Activated T-helper 1 cell treated with anti-CD3 and anti-CD28 coated beads, Interleukin-12 subunit alpha, Interleukin-12 subunit beta, Interleukin-2, Interleukin-4 antibody, amounts not matched to agents 30 ng/mL and 10 ng/mL and 1 ng/mL, durations not matched to agents 14 hours and 24 hours and 36 hours (primary cell): ENCODE measurements at regions of chr22 and their contacts with region 1.

Region 1: GRCh38 chr22:20507253-20508066 is at the start of gene MED15:
- DNase-seq: peak; percentile 88
- H3K4me3 Mint-ChIP-seq: peak within 1 kb of the TSS; percentile 95
- H3K27ac Mint-ChIP-seq: peak within 1 kb of the TSS; percentile 96
- H3K4me1 Mint-ChIP-seq: peaks cover 50% of the 10 kb centered on the region
- H3K27me3 Mint-ChIP-seq: no peaks in the 10 kb centered on the region
- total RNA-seq, gene MED15: 103 and 110 TPM in 2 replicates

Region 2: GRCh38 chr22:20319745-20320658 is 187.5 kb before region 1 on chr22 and contains the start of gene DGCR6L:
- intact Hi-C with region 1: loop called (anchors 5 kb)
- DNase-seq: peak; percentile 97
- H3K4me3 Mint-ChIP-seq: peak within 1 kb of the TSS; percentile 92
- H3K27ac Mint-ChIP-seq: peak within 1 kb of the TSS; percentile 86
- H3K4me1 Mint-ChIP-seq: peaks cover 62% of the 10 kb centered on the region
- H3K27me3 Mint-ChIP-seq: no peaks in the 10 kb centered on the region
- total RNA-seq, gene DGCR6L: 35.5 and 40.6 TPM in 2 replicates

Region 3: DNA sequence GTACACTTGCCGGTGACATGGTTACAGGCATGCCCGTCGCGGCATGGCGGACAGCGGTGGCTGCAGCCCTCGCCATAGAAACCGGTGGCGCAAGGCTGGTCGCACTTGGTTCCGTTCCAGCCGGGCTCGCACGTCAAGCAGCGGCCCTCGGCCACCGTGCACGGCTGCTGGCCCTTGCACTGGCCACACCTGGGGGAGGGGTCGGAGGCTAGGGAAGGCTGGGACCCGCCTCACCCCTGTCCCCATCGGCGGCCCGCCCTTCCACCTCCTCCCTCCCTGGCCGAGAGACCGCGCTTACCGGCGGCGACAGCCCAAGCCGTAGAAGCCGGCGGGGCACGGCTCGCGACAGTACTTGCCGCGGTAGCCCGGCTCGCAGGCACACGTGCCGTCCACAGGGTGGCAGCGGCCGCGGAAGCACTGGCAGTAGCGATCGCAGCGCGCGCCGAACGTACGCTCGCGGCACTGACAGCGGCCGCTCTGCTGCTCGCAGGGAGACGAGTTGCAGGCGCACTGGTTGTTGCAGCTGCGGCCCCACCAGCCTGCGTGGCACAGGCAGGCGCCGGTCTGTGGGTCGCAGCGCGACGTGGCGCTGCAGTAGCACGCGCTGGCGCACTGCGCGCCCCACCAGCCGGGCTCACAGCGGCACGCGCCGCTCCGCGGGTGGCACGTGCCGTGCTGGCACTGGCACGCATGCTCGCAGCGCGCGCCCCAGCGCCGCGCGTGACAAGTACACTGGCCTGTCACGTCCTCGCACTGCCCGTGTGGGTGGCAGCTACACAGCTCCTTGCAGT is 76.5 kb before region 1 on chr22:
- intact Hi-C with region 1: loop called (anchors 1 kb)
- DNase-seq: peak; percentile 29
- H3K4me3 Mint-ChIP-seq: peak overlapping the region; percentile 42
- H3K27ac Mint-ChIP-seq: no peak overlapping the region
- H3K4me1 Mint-ChIP-seq: peaks cover 6% of the 10 kb centered on the region
- H3K27me3 Mint-ChIP-seq: peaks cover 60% of the 10 kb centered on the region

Region 4: DNA sequence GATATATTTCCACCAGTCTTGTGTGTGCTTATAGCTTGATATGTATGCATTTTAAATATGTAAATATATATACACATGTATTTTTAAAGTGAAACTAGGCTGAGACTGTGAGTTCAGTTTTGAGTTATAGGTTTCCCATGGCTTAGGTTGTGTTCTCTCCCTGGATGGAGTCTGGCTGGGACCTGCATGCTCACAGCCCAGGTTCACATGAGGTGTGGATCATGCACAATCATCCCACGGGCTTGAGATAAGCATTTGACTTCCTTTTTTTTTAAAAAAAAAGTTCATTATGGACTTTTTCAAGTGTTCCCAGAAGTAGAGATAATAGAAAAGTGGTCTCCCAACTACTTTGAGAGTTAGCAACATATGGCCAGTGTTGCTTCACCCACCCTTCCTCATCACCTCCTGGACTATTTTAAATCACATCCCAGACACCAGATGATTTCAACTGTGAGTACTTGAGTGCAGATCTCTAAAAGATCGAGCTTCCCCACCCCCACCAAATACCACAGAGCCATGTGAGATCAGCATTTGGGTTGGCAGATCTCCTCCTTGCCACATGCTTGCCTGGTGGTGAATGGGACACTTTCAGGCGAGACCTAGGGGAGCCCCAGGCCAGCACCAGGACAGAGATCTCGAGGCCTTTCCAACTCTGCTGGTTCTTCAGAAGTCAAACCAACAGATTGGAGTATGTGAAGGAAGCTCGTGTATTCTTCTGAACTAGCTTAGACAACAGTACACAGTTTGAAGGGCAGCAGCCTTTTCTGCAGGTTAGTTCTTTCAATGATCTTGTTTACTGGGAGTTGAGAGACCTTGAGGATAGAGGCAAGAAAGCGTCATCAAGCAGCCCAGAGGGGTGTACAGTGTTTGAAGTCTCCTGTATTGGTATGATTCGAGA is 15.9 kb after region 1 on chr22:
- intact Hi-C with region 1: loop called (anchors 2 kb)
- DNase-seq: no peak
- H3K4me3 Mint-ChIP-seq: peak overlapping the region; percentile 19
- H3K27ac Mint-ChIP-seq: peak overlapping the region; percentile 47
- H3K4me1 Mint-ChIP-seq: peaks cover 56% of the 10 kb centered on the region
- H3K27me3 Mint-ChIP-seq: no peaks in the 10 kb centered on the region

Region 5: GRCh38 chr22:20550821-20551744 is 43.6 kb after region 1 on chr22:
- intact Hi-C with region 1: loop called (anchors 1 kb)
- DNase-seq: no peak
- H3K4me3 Mint-ChIP-seq: peak overlapping the region; percentile 75
- H3K27ac Mint-ChIP-seq: peak overlapping the region; percentile 95
- H3K4me1 Mint-ChIP-seq: peaks cover 61% of the 10 kb centered on the region
- H3K27me3 Mint-ChIP-seq: no peaks in the 10 kb centered on the region

Region 6: GRCh38 chr22:20858615-20859416 is 351.4 kb after region 1 on chr22 and contains the starts of genes PI4KA and SNAP29:
- intact Hi-C with region 1: loop called (anchors 2 kb)
- DNase-seq: peak; percentile 97
- H3K4me3 Mint-ChIP-seq: peak within 1 kb of the TSS; percentile 85
- H3K27ac Mint-ChIP-seq: peak within 1 kb of the TSS; percentile 88
- H3K4me1 Mint-ChIP-seq: peaks cover 51% of the 10 kb centered on the region
- H3K27me3 Mint-ChIP-seq: peaks cover 2% of the 10 kb centered on the region
- total RNA-seq, gene PI4KA: 80.4 and 84.7 TPM in 2 replicates
- total RNA-seq, gene SNAP29: 24.6 and 27.7 TPM in 2 replicates

Region 7: DNA sequence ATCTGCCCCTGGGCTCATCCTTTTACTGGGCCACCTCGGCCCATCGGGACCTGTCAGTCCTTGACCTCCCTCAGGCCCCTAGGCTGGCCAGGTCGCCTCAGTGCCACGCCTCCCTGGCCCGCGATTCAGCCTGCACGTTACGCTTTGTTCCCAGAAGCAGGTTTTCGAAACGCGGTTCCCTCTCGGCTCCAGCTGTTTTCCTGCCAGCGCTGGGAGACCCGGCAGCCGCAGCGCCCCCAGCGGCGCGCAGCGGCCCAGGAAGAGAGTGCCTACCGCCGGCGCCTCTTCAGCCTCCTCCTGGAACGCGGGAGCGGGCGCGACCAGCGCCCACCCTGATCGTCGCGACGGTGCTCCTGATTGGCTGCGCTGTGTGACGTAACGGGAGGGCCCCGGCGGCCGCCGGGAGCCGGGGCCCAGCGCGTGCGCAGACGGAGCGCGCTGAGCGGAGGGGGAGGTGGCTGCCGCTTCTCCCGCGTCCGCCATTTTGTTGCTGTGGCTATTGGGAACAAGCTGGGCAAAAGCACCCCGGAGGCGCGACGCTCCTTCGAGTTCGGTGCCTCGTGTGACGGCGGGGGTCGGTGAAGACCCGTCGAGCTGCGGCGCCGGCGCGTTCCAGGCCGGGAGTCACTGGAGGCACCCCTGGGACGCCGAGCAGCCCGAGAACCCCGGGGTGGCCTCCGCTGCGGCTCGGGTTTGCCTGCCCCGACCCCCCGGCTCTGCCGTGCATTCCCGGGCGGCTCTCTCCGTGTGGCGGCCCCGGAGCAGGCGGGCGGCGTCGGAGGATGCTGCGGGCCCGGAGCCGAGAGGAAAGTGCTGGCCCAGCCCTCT is 409.7 kb after region 1 on chr22 and contains the start of gene CRKL:
- intact Hi-C with region 1: loop called (anchors 10 kb)
- DNase-seq: peak; percentile 96
- H3K4me3 Mint-ChIP-seq: peak within 1 kb of the TSS; percentile 99
- H3K27ac Mint-ChIP-seq: peak within 1 kb of the TSS; percentile 88
- H3K4me1 Mint-ChIP-seq: peaks cover 34% of the 10 kb centered on the region
- H3K27me3 Mint-ChIP-seq: peaks cover 3% of the 10 kb centered on the region
- total RNA-seq, gene CRKL: 78.2 and 79.2 TPM in 2 replicates